ENCODE measurements at regions of chr20 and their contacts with region 1.

Region 1: DNA sequence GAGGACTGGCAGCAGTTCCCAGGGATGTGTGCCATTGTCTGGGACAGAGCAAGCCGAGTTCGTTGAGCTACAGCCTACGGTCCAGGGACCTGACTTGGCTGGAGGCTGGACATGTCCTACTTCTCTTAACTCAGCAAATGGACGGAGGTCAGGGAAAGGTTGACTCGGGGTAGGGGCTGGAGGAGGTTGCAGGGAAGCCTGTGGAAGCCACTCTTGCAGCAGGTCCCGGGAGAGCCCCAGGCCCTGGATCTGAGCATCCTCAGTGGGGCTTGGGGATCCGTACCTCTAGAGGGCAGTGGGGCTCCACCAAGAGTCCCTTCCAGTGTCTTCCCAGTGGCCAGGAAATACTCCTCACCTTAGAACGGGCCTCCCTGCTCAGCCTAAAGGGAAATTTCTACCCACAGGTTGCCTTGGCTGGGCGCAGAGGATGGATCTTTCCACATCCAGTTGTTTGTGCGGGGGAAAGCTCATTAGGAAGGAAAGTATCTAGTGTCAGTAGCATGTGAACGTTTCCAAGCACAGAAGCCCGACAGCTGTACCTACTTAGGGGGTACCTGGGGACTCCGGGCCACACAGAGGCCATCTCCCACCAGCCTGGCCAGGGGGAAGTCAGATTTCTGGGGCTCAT is 170.2 kb downstream of the NFATC2 start:
- DNase-seq: no peak
- H3K4me3 ChIP-seq: no peak overlapping the region
- H3K27ac ChIP-seq: no peak overlapping the region
- H3K27me3 ChIP-seq: no peaks in the 10 kb centered on the region
- CTCF ChIP-seq: peak; percentile 96

Region 2: GRCh38 chr20:51385646-51386530 is 13.6 kb after region 1 on chr20:
- CTCF ChIA-PET with region 1: interaction called, 10 read pairs
- POLR2A ChIA-PET with region 1: no interaction called
- DNase-seq: no peak
- H3K4me3 ChIP-seq: no peak overlapping the region
- H3K27ac ChIP-seq: no peak overlapping the region
- H3K27me3 ChIP-seq: no peaks in the 10 kb centered on the region
- CTCF ChIP-seq: peak; percentile 72

Region 3: GRCh38 chr20:51579137-51579536 is 206.8 kb after region 1 on chr20:
- CTCF ChIA-PET with region 1: no interaction called
- POLR2A ChIA-PET with region 1: no interaction called
- DNase-seq: no peak
- H3K4me3 ChIP-seq: no peak overlapping the region
- H3K27ac ChIP-seq: no peak overlapping the region
- H3K27me3 ChIP-seq: peaks cover 5% of the 10 kb centered on the region
- CTCF ChIP-seq: no peak

Region 4: GRCh38 chr20:51624157-51624731 is 252.0 kb after region 1 on chr20:
- CTCF ChIA-PET with region 1: interaction called, 12 read pairs
- POLR2A ChIA-PET with region 1: no interaction called
- DNase-seq: no peak
- H3K4me3 ChIP-seq: no peak overlapping the region
- H3K27ac ChIP-seq: peak overlapping the region; percentile 31
- H3K27me3 ChIP-seq: no peaks in the 10 kb centered on the region
- CTCF ChIP-seq: peak; percentile 71

Measured in AG04450 (cell line).